ENCODE measurements at regions of chr19 and their contacts with region 1.

Region 1: GRCh38 chr19:41872775-41873647 is 4.1 kb upstream of the CD79A start:
- DNase-seq: peak; percentile 90 to 94
- ATAC-seq: peak; percentile 63 to 79
- H3K4me3 ChIP-seq: no peak overlapping the region
- H3K27ac ChIP-seq: no peak overlapping the region
- H3K4me1 ChIP-seq: peaks cover 35% of the 10 kb centered on the region
- CTCF ChIP-seq: peak; percentile 94
- EP300 ChIP-seq: no peak
- POLR2A ChIP-seq: no peak
- RAD21 ChIP-seq: peak; percentile 87

Region 2: GRCh38 chr19:41691268-41691970 is 181.6 kb before region 1 on chr19:
- CTCF ChIA-PET with region 1: no interaction called
- POLR2A ChIA-PET with region 1: no interaction called
- DNase-seq: peak; percentile 42 to 76
- ATAC-seq: peak; percentile 72 to 88
- H3K4me3 ChIP-seq: no peak overlapping the region
- H3K27ac ChIP-seq: no peak overlapping the region
- H3K4me1 ChIP-seq: no peaks in the 10 kb centered on the region
- CTCF ChIP-seq: peak; percentile 77
- EP300 ChIP-seq: no peak
- POLR2A ChIP-seq: no peak
- RAD21 ChIP-seq: peak; percentile 51 to 67; a peak in 4 of 5 replicates

Region 3: GRCh38 chr19:41746593-41747227 is 126.3 kb before region 1 on chr19:
- CTCF ChIA-PET with region 1: no interaction called
- POLR2A ChIA-PET with region 1: no interaction called
- DNase-seq: peak; percentile 84 to 87
- ATAC-seq: peak; percentile 90 to 98
- H3K4me3 ChIP-seq: no peak overlapping the region
- H3K27ac ChIP-seq: no peak overlapping the region
- H3K4me1 ChIP-seq: no peaks in the 10 kb centered on the region
- CTCF ChIP-seq: peak; percentile 96
- EP300 ChIP-seq: no peak
- POLR2A ChIP-seq: no peak
- RAD21 ChIP-seq: peak; percentile 94 to 96

Region 4: GRCh38 chr19:41859618-41860418 is 13.2 kb before region 1 on chr19 and contains the start of gene RPS19:
- CTCF ChIA-PET with region 1: interaction called, 77 read pairs
- POLR2A ChIA-PET with region 1: interaction called, 102 read pairs
- DNase-seq: peak; percentile 100
- ATAC-seq: peak; percentile 86 to 92
- H3K4me3 ChIP-seq: peak within 1 kb of the TSS; percentile 89
- H3K27ac ChIP-seq: peak within 1 kb of the TSS; percentile 90 to 95
- H3K4me1 ChIP-seq: peaks cover 40% of the 10 kb centered on the region
- CTCF ChIP-seq: peak; percentile 56
- EP300 ChIP-seq: peak in 1 of 2 experiments; percentile 13; a peak in 1 of 5 replicates
- POLR2A ChIP-seq: peak; percentile 95
- RAD21 ChIP-seq: no peak; a peak in 1 of 5 replicates
- polyA plus RNA-seq, gene RPS19: 2,749 and 3,564 TPM in 2 replicates

Region 5: DNA sequence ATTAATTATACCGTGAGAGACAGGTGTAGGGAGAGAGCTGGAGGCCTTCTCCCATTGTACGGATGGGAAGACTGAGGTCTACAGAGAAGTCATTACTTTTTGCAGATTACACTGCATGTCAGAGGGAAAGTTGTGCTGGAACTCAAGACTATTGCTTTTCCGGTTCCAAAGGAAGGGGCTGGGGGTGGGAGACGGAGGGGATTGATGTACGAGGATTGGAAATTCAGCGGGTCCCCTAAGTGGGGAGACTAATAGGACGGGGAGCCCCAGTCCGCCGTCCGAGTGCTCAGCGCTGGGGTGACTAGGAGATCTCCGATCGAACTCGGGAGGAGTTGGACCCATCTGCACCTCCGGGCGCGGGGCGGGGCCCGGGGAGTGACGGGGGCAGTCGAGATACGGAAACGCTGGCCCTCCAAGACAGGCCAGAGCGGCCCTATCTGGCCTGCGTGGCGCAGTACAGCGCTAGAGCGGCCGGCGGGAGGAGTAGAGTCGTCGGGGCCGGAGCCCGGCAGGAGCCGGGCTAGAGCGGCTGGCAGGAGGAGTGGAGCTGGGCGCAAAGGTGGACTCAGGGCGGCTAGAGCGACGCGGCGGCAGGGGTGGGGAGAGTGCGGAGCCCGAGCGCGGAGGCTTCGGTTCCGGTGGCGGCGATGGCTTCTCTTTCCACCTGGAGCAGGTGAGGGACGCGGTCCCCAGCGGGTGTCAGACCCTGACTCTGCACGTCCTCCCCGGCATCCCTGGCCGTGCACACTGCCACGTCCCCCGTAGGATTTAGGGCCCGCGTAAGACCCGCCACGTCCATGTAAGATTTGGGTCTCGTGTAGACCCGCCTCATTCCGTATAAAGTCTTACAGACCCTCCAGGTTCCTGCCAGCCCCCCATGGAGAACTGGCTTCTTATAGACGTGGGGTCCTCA is 11.1 kb after region 1 on chr19:
- CTCF ChIA-PET with region 1: interaction called, 63 read pairs
- POLR2A ChIA-PET with region 1: interaction called, 50 read pairs
- DNase-seq: peak; percentile 100
- ATAC-seq: peak; percentile 78 to 97
- H3K4me3 ChIP-seq: peak overlapping the region; percentile 78
- H3K27ac ChIP-seq: peak overlapping the region; percentile 81 to 87
- H3K4me1 ChIP-seq: peaks cover 15% of the 10 kb centered on the region
- CTCF ChIP-seq: no peak; the same call in 2 of the 3 replicates
- EP300 ChIP-seq: peak in 1 of 2 experiments; percentile 53; a peak in 2 of 5 replicates
- POLR2A ChIP-seq: peak; percentile 73
- RAD21 ChIP-seq: no peak

Region 6: DNA sequence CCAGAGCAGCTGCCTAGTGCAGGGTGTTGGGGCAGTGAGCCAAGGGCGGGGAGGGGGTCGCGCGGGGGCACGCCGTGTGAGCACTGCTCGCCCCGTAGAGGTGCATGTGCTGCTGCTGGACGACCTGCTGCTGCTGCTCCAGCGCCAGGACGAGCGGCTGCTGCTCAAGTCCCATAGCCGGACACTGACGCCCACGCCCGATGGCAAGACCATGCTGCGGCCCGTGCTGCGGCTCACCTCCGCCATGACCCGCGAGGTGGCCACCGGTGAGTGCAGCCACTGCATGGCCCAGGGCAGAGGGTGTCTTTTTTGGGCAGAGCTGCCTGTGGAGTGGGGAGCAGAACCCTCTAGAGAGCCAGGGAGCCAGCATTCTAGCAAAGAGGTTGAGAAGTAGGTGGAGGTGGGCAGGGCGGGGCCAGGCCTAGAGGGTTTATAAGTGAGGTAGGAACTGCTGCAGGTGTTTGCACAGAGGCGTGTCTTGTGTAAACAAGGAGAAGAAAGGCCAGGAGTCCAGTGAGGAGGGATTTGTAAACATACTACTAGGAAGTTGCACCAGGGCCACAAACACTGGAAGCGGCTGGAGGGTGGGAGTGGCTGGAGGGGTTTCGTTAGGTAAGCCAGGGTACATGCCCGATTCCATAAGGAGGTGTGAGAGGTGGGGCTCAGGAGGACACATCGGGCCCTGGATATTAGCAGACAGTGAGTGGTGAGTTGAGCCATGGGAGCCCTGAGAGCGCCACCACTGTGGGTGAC is 31.3 kb after region 1 on chr19:
- CTCF ChIA-PET with region 1: interaction called, 14 read pairs
- POLR2A ChIA-PET with region 1: no interaction called
- DNase-seq: peak; percentile 79 to 94
- ATAC-seq: peak; percentile 20 to 70; a peak in 5 of 6 replicates
- H3K4me3 ChIP-seq: peak overlapping the region; percentile 7; the same call in 1 of the 3 replicates
- H3K27ac ChIP-seq: peak overlapping the region; percentile 42 to 78; a peak in 5 of 6 replicates
- H3K4me1 ChIP-seq: peaks cover 46% of the 10 kb centered on the region
- CTCF ChIP-seq: no peak
- EP300 ChIP-seq: no peak
- POLR2A ChIP-seq: no peak
- RAD21 ChIP-seq: no peak

Region 7: GRCh38 chr19:41928221-41928683 is 55.2 kb after region 1 on chr19 and contains the start of gene ERFL:
- CTCF ChIA-PET with region 1: interaction called, 49 read pairs
- POLR2A ChIA-PET with region 1: interaction called, 5 read pairs
- DNase-seq: no peak
- ATAC-seq: peak; percentile 33 to 61
- H3K4me3 ChIP-seq: peak within 1 kb of the TSS; percentile 59
- H3K27ac ChIP-seq: peak within 1 kb of the TSS; percentile 29 to 77; a peak in 4 of 6 replicates
- H3K4me1 ChIP-seq: peaks cover 13% of the 10 kb centered on the region; the same call in 1 of the 3 replicates
- CTCF ChIP-seq: 0 out of 3 replicates have a peak, but pooled peaks have one; percentile 21
- EP300 ChIP-seq: no peak
- POLR2A ChIP-seq: no peak
- RAD21 ChIP-seq: no peak
- polyA plus RNA-seq, gene ERFL: 0.19 and 0.21 TPM in 2 replicates

Region 8: DNA sequence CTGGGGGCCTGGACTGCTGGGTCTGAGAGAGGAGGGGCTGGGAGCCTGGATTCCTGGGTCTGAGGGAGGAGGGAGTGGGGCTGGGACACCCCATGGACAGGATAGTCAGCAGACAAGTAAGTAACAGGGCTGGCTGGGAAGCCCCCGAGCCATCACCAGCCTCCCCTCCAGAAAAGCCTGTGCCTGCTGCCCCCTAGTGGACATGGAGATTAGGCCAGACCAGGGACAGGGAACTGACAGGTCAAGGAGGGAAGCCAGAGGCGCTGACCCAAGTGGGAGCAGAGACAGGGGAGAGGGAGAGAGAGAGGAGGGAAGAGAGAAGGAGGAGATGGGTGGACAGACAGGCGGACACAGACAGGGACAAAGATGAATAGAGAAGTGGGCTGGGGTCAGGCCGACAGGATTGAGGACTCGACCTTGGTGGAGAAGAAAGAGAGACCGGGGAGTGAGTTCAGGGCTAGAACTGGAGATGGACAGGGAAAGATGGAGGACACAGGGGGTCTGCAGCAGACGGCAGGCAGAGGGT is 61.9 kb after region 1 on chr19:
- CTCF ChIA-PET with region 1: interaction called, 49 read pairs
- POLR2A ChIA-PET with region 1: interaction called, 6 read pairs
- DNase-seq: peak; percentile 80 to 96
- ATAC-seq: peak; percentile 48 to 88
- H3K4me3 ChIP-seq: no peak overlapping the region
- H3K27ac ChIP-seq: no peak overlapping the region
- H3K4me1 ChIP-seq: 0 out of 3 replicates have a peak, but pooled peaks cover 3% of the 10 kb centered on the region
- CTCF ChIP-seq: peak; percentile 96
- EP300 ChIP-seq: no peak
- POLR2A ChIP-seq: no peak
- RAD21 ChIP-seq: peak; percentile 77 to 90

Region 9: DNA sequence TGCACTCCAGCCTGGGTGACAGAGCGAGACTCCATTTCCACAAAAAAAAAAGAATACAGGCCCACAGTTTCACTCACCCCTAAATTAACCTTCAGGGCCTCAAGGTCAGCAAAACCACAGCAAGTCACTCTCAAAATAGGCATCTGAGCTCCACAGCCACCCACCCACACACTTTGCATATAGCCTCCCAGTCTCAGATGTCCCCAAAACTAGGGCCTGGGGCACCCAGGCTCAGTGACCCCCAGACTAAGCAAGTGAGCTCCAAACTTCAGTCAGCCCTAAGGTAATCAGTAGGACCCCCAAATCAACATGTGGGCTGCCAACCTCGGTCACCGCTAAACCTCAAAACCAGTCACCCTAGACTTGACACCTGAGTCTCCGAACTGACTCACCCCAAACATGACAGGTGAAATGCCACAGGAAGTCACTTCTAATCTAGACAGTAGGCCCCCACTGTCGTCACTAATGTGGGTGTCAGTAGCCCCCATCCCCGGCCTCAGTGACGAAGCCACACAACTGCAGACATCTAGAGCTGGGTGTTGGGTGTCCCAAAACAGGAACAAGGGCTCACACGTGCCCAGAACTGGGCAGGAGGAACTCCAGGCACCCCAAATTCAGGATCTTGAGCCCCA is 72.2 kb after region 1 on chr19:
- CTCF ChIA-PET with region 1: interaction called, 67 read pairs
- POLR2A ChIA-PET with region 1: interaction called, 5 read pairs
- DNase-seq: no peak
- ATAC-seq: no peak
- H3K4me3 ChIP-seq: no peak overlapping the region
- H3K27ac ChIP-seq: no peak overlapping the region
- H3K4me1 ChIP-seq: peaks cover 5% of the 10 kb centered on the region; the same call in 1 of the 3 replicates
- CTCF ChIP-seq: no peak
- EP300 ChIP-seq: no peak
- POLR2A ChIP-seq: no peak; the same call in 1 of the 2 replicates
- RAD21 ChIP-seq: no peak

Region 10: GRCh38 chr19:42048992-42049391 is 176.0 kb after region 1 on chr19:
- CTCF ChIA-PET with region 1: no interaction called
- POLR2A ChIA-PET with region 1: no interaction called
- DNase-seq: no peak
- ATAC-seq: no peak; a peak in 1 of 6 replicates
- H3K4me3 ChIP-seq: peak overlapping the region; percentile 21
- H3K27ac ChIP-seq: 0 out of 6 replicates have a peak overlapping the region, but pooled peaks of 1 of the 2 experiments have one; percentile 18
- H3K4me1 ChIP-seq: peaks cover 14% of the 10 kb centered on the region; the same call in 1 of the 3 replicates
- CTCF ChIP-seq: no peak
- EP300 ChIP-seq: no peak
- POLR2A ChIP-seq: no peak
- RAD21 ChIP-seq: no peak

Measured in A549 (cell line).